Posterior vena cava (tissue), 2 donors: ENCODE measurements at regions of chr13 and their contacts with region 1.

Region 1: DNA sequence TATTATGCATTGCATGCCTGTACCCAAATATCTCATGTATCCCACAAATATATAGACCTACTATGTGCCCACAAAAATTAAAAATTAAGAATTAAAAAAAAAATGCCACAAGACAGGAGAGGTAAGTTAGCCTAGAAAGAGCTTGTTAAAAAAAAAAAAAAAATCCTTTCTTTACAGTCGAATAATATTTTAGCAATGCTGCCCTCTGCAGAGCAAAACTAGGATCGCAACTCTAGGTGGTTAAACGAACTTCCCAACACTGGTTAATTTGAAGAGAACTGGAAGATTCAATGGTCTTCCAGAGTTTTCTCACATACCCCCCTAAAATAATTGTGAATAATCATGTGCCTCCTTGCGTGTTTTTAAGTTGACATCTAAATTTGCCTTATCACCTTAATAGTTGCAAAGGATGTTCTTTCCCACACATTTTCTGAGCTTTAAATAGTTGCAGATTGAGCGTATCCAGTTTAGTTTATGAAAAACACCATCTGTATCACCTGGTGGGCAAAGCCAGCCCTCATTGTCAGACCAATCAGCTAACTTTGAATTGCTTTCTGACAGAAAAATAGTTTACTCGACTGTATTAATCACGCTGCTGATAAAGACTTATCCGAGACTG is 47.4 kb upstream of the RCBTB2 start:
- DNase-seq: no peak

Region 2: GRCh38 chr13:48319531-48320398 is 260.5 kb before region 1 on chr13:
- intact Hi-C with region 1: loop called in 1 of 2 experiments (anchors 10 kb)
- DNase-seq: no peak

Region 3: GRCh38 chr13:48334534-48335127 is 245.7 kb before region 1 on chr13:
- intact Hi-C with region 1: loop called (anchors 2 to 10 kb)
- DNase-seq: no peak

Region 4: GRCh38 chr13:48804821-48805601 is 224.7 kb after region 1 on chr13:
- intact Hi-C with region 1: no loop called
- DNase-seq: no peak